ENCODE measurements at regions of chr9 and their contacts with region 1.

Region 1: DNA sequence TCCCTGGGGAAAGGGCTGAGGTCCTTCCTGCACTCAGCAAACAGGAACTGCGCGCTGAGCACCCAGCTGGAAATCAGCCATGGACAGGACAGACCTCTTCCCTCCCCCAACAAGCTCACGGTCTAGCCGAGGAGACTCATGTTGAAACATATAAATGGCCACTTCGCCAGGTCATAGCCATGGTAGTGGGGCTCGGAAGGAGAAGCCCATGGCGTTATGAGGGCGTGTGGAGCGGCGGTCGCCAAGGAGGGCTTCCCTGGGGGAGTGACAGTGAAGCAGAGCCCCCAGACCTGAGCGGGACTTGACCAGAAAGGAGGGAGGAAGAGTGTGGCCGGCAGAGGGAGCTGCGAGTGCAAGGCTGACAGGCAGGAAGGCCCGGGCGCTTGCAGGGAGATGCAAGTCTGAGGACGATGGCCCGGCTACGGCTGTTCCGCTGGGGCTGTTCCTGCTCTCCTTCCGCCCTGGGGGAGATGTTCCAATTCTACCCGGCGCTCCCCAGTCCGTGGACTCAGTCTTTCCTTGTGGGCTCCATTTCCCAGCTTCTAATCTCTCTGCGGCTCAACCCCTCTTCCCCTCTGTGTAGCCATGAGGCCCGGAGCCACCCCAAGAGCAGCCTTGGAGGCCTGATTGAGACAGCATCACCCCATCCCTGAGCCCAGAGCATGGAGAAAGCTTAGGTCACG is 43.9 kb upstream of the PRRC2B start:
- DNase-seq: peak; percentile 87 to 96
- H3K4me3 ChIP-seq: peak overlapping the region in 3 of 4 experiments; percentile 20 to 55 (median 27); a peak in 4 of 8 replicates
- H3K27ac ChIP-seq: no peak overlapping the region
- H3K4me1 ChIP-seq: peaks cover 0 to 8% (median 5%) of the 10 kb centered on the region in 4 experiments; a peak in 6 of 7 replicates
- H3K27me3 ChIP-seq: no peaks in the 10 kb centered on the region
- CTCF ChIP-seq: peak; percentile 81 to 90 (median 85)
- EP300 ChIP-seq: no peak
- POLR2A ChIP-seq: peak in 1 of 2 experiments; percentile 50; a peak in 1 of 3 replicates
- RAD21 ChIP-seq: peak; percentile 83 to 87

Region 2: GRCh38 chr9:131178382-131178781 is 171.6 kb before region 1 on chr9:
- CTCF ChIA-PET with region 1: interaction called, 11 read pairs
- POLR2A ChIA-PET with region 1: no interaction called
- DNase-seq: peak; percentile 25 to 87
- H3K4me3 ChIP-seq: no peak overlapping the region
- H3K27ac ChIP-seq: no peak overlapping the region
- H3K4me1 ChIP-seq: no peaks in the 10 kb centered on the region
- H3K27me3 ChIP-seq: no peaks in the 10 kb centered on the region
- CTCF ChIP-seq: peak; percentile 93 to 99 (median 97)
- EP300 ChIP-seq: no peak
- POLR2A ChIP-seq: no peak
- RAD21 ChIP-seq: peak; percentile 83 to 87

Region 3: GRCh38 chr9:131227112-131227958 is 122.7 kb before region 1 on chr9:
- CTCF ChIA-PET with region 1: no interaction called
- POLR2A ChIA-PET with region 1: no interaction called
- DNase-seq: no peak
- H3K4me3 ChIP-seq: no peak overlapping the region
- H3K27ac ChIP-seq: no peak overlapping the region
- H3K4me1 ChIP-seq: peaks cover 8 to 16% (median 12%) of the 10 kb centered on the region in 4 experiments; a peak in 6 of 7 replicates
- H3K27me3 ChIP-seq: no peaks in the 10 kb centered on the region
- CTCF ChIP-seq: no peak
- EP300 ChIP-seq: no peak
- POLR2A ChIP-seq: no peak
- RAD21 ChIP-seq: no peak

Region 4: DNA sequence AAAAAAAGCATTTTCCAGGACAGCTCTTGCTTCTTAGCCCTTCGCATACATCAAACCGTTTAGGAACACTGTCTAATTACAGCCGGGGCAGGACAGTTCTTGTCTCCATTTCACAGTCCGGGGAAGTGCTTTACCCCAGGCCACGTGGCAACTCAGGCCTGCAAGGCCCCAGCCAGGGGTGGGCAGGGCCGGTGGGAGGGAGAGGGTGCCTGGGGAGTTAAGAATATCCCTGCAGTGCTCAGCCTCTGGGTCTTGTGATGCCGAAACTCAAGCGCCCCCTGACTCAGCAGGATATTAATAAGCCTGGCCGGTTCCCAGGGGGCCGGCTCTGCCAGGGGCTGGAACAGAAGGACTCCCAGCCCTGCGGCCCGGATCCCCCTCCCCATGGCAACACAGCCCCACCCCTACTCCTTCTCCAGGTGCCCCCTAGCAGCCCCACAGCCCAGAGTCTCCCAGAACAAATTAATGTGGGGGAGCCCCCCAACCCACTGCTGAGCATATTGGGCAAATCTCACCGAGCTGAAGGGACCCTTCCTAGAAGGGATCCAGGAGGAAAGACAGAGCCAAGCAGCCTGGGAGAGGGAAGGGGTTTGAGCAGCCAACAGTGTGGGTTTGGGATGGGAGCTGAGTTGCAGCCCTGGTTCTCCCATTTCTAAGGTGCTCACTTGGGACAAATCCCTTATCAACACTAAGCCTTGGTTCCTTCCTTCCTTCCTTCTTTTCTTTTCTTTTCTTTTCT is 15.2 kb before region 1 on chr9:
- CTCF ChIA-PET with region 1: interaction called, 49 read pairs
- POLR2A ChIA-PET with region 1: interaction called, 4 read pairs
- DNase-seq: no peak
- H3K4me3 ChIP-seq: no peak overlapping the region
- H3K27ac ChIP-seq: no peak overlapping the region
- H3K4me1 ChIP-seq: peaks cover 0 to 14% (median 8%) of the 10 kb centered on the region in 4 experiments
- H3K27me3 ChIP-seq: no peaks in the 10 kb centered on the region
- CTCF ChIP-seq: no peak
- EP300 ChIP-seq: no peak
- POLR2A ChIP-seq: no peak
- RAD21 ChIP-seq: no peak

Region 5: DNA sequence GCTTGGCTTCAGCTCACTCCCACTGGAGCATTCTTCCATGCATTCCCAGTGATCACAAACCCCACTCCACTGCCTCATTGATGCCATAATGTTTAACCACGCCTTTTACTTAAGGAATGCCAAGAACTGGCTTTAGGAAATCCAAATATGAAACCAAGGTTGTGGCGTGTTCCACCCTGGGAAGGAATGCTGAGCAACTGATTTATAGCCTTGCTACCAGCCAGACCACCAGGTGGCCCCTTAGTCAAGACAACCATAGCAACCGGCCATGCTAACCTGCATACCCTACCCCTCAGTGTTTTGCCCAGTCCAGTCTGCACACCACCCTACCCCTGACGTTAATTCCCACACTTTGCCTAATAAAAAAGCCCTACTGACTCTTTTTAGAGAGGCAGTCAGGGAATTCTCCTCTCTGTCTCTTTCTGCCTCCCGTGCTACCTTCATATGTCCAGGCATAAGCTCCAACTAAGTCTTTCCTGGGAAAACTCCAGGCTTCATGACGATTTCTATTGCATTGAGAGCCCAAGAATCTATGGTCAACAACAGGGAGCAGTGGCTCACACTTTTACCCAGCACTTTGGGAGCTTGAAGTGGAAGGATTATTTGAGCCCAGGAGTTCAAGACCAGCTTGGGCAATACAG is 16.9 kb after region 1 on chr9:
- CTCF ChIA-PET with region 1: interaction called, 36 read pairs
- POLR2A ChIA-PET with region 1: interaction called, 14 read pairs
- DNase-seq: peak in 1 of 2 experiments; percentile 63
- H3K4me3 ChIP-seq: no peak overlapping the region
- H3K27ac ChIP-seq: no peak overlapping the region
- H3K4me1 ChIP-seq: peaks cover 0 to 3% (median 0%) of the 10 kb centered on the region in 4 experiments; a peak in 1 of 7 replicates
- H3K27me3 ChIP-seq: no peaks in the 10 kb centered on the region
- CTCF ChIP-seq: peak; percentile 57 to 68 (median 58)
- EP300 ChIP-seq: no peak
- POLR2A ChIP-seq: no peak
- RAD21 ChIP-seq: peak; percentile 67 to 79

Region 6: GRCh38 chr9:131393622-131394463 is 43.8 kb after region 1 on chr9 and contains the start of gene PRRC2B:
- CTCF ChIA-PET with region 1: interaction called, 12 read pairs
- POLR2A ChIA-PET with region 1: interaction called, 21 read pairs
- DNase-seq: peak; percentile 75 to 87
- H3K4me3 ChIP-seq: peak within 1 kb of the TSS; percentile 70 to 88 (median 83)
- H3K27ac ChIP-seq: peak within 1 kb of the TSS; percentile 85
- H3K4me1 ChIP-seq: peaks cover 8 to 28% (median 14%) of the 10 kb centered on the region in 4 experiments
- H3K27me3 ChIP-seq: no peaks in the 10 kb centered on the region
- CTCF ChIP-seq: peak in 2 of 3 experiments; percentile 42 to 63; a peak in 3 of 4 replicates
- EP300 ChIP-seq: no peak; a peak in 1 of 3 replicates
- POLR2A ChIP-seq: peak; percentile 57 to 64; a peak in 2 of 3 replicates
- RAD21 ChIP-seq: peak in 1 of 2 experiments; percentile 57; a peak in 2 of 4 replicates
- total RNA-seq, gene PRRC2B: 249 and 255 TPM in 2 replicates

Region 7: GRCh38 chr9:131423171-131423581 is 73.2 kb after region 1 on chr9:
- CTCF ChIA-PET with region 1: interaction called, 10 read pairs
- POLR2A ChIA-PET with region 1: interaction called, 5 read pairs
- DNase-seq: peak in 1 of 2 experiments; percentile 53
- H3K4me3 ChIP-seq: peak overlapping the region in 1 of 4 experiments; percentile 19; a peak in 1 of 8 replicates
- H3K27ac ChIP-seq: no peak overlapping the region
- H3K4me1 ChIP-seq: peaks cover 21 to 39% (median 35%) of the 10 kb centered on the region in 4 experiments
- H3K27me3 ChIP-seq: no peaks in the 10 kb centered on the region
- CTCF ChIP-seq: no peak
- EP300 ChIP-seq: no peak
- POLR2A ChIP-seq: peak in 1 of 2 experiments; percentile 59; a peak in 1 of 3 replicates
- RAD21 ChIP-seq: no peak

Measured in H1 (cell line).